Activated naive CD4-positive, alpha-beta T cell treated with anti-CD3 and anti-CD28 coated beads for 36 hours (primary cell): ENCODE measurements at regions of chr2 and their contacts with region 1.

Region 1: GRCh38 chr2:191114403-191114886 is 36.3 kb downstream of the STAT4 start:
- DNase-seq: peak; percentile 74
- H3K4me3 Mint-ChIP-seq: peak overlapping the region; percentile 57
- H3K27ac Mint-ChIP-seq: peak overlapping the region; percentile 87
- H3K4me1 Mint-ChIP-seq: peaks cover 78% of the 10 kb centered on the region
- H3K27me3 Mint-ChIP-seq: no peaks in the 10 kb centered on the region

Region 2: GRCh38 chr2:191013932-191014652 is 100.4 kb before region 1 on chr2 and contains the start of gene STAT1:
- CTCF ChIA-PET with region 1: no interaction called
- intact Hi-C with region 1: loop called (anchors 1 kb)
- DNase-seq: peak; percentile 95
- H3K4me3 Mint-ChIP-seq: no peak within 1 kb of the TSS
- H3K27ac Mint-ChIP-seq: no peak within 1 kb of the TSS
- H3K4me1 Mint-ChIP-seq: peaks cover 39% of the 10 kb centered on the region
- H3K27me3 Mint-ChIP-seq: no peaks in the 10 kb centered on the region
- total RNA-seq, gene STAT1: 376 to 402 TPM

Region 3: DNA sequence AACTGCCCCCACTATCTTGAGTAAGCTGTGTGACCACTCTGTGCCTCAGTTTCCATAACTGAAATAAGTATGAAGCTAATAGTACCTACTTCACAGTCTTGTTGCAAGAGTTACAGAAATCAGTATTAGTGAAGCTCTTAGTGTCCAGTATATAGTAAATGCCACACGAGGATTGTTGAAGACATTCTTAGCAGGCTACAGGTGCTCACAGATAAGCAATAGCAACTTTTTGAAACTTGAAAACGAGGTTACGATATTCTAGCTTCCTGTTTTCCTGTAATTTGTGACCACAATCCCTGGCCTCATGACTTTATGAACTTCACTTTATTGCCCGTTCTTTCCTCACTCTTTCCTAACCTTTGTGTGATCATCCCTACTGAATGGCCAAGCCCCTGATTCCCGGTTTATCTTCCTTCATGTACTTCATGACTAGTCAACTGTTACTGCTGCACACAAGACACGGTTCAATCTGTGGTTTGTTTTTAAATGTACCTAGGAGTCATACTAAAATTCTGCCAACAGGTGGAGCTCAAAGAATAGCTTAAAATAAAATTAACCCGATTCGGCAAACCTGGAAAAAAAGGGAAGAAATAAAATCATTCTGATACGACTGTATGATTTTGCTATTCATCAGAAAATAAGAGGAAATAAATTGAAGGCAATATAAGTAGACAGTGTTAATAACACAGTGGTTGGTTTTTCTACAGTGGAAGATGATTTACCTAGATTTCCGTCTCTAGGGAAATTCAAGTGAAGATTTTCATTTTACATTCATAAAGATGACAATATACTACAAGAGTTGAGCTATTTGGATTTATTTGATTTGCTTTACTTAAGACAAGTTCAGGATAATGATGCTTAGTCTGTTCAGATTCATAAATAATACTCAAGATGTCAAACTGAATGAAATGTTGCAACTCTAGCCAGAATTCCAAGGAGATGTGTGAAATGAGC is 62.3 kb before region 1 on chr2:
- CTCF ChIA-PET with region 1: interaction called, 21 read pairs
- intact Hi-C with region 1: loop called (anchors 2 kb)
- DNase-seq: no peak
- H3K4me3 Mint-ChIP-seq: no peak overlapping the region
- H3K27ac Mint-ChIP-seq: no peak overlapping the region
- H3K4me1 Mint-ChIP-seq: peaks cover 19% of the 10 kb centered on the region
- H3K27me3 Mint-ChIP-seq: no peaks in the 10 kb centered on the region

Region 4: DNA sequence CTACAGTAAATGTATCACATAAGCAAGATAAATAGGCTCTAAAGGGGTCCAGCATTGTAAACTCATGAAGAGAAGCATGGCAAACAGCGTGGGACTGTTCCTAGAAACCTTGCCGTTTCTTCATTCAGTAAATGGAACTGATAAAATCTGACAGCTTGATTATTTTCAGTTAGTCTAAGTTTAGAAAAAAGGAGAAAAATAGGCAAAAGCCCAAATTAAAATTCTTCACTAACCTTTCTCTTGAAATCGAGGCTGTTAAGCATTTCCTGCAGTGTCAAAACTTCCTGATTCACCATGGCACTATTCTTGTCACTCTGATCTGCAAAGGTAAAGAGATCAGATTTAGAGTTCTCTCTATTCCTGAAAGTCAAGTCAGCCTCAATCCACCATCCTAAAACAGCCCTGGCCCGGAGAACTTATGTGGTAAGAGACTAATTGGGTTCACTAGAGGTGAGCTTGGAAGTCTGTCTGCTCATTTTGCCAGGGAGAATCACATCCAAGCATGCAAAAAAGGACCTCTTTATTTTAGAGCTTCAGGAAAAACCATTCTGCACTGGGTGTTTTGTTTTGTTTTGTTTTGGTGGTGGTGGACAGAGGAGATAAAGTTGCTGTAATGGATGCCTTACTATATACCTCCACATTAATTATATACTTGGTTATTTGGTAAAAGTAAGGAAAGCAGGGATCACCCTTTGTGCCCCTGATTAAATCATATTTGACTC is 48.1 kb before region 1 on chr2:
- CTCF ChIA-PET with region 1: no interaction called
- intact Hi-C with region 1: loop called (anchors 1 kb)
- DNase-seq: peak; percentile 41
- H3K4me3 Mint-ChIP-seq: peak overlapping the region; percentile 25
- H3K27ac Mint-ChIP-seq: peak overlapping the region; percentile 76
- H3K4me1 Mint-ChIP-seq: peaks cover 77% of the 10 kb centered on the region
- H3K27me3 Mint-ChIP-seq: no peaks in the 10 kb centered on the region

Region 5: GRCh38 chr2:191128172-191128910 is 13.9 kb after region 1 on chr2:
- CTCF ChIA-PET with region 1: interaction called, 6 read pairs
- intact Hi-C with region 1: loop called (anchors 1 kb)
- DNase-seq: peak; percentile 27
- H3K4me3 Mint-ChIP-seq: peak overlapping the region; percentile 32
- H3K27ac Mint-ChIP-seq: peak overlapping the region; percentile 63
- H3K4me1 Mint-ChIP-seq: peaks cover 65% of the 10 kb centered on the region
- H3K27me3 Mint-ChIP-seq: no peaks in the 10 kb centered on the region

Region 6: DNA sequence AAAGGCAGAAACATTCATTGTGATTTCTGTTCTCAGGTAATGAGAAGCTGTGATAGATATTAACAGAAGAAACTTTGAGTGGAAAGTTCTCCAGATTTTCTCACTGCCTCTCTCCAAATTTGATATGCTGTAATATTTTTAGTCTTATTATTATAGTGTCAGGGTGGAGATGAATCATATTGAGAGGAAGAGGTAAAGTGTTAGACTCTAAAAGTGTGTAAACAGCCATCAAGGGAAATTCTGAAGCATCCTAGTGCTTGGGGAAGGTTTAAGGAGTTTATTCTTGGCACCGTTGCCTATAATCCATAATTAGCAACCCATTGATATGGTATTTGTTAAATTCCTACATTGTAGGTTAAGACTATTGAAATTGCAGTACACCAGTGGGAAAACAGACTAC is 458.8 kb after region 1 on chr2:
- CTCF ChIA-PET with region 1: no interaction called
- intact Hi-C with region 1: loop called (anchors 2 kb)
- DNase-seq: no peak
- H3K4me3 Mint-ChIP-seq: no peak overlapping the region
- H3K27ac Mint-ChIP-seq: peak overlapping the region; percentile 89
- H3K4me1 Mint-ChIP-seq: peaks cover 54% of the 10 kb centered on the region
- H3K27me3 Mint-ChIP-seq: no peaks in the 10 kb centered on the region